A549 (cell line): ENCODE measurements at regions of chr9 and their contacts with region 1.

Region 1: DNA sequence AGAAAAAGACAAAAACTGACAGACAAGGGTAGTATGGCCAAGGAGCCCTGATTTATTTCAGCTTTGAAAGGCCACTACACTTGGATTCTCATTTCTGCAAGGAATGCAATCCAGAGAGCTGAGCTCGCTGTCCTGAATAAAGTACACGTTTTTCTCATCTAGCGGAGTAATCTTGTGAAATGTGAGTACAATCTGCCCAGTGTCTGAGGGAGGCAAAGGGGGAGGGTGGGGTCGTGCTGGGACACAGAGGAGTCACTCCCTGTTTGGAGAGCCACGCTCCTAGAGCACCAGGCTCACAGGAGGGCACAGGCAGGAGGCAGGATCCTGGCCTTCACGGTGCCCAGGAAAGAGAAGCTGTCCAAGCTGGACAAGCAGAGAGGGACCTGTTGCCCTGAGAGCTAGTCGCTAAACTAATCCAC is 51.0 kb upstream of the IFNK start:
- DNase-seq: no peak
- ATAC-seq: no peak
- H3K4me3 ChIP-seq: no peak overlapping the region
- H3K27ac ChIP-seq: no peak overlapping the region
- H3K4me1 ChIP-seq: no peaks in the 10 kb centered on the region
- CTCF ChIP-seq: no peak
- EP300 ChIP-seq: no peak
- POLR2A ChIP-seq: no peak
- RAD21 ChIP-seq: no peak

Region 2: GRCh38 chr9:27447031-27447683 is 26.0 kb before region 1 on chr9:
- CTCF ChIA-PET with region 1: no interaction called
- POLR2A ChIA-PET with region 1: no interaction called
- DNase-seq: no peak
- ATAC-seq: peak; percentile 56 to 68; a peak in 3 of 6 replicates
- H3K4me3 ChIP-seq: no peak overlapping the region
- H3K27ac ChIP-seq: no peak overlapping the region
- H3K4me1 ChIP-seq: no peaks in the 10 kb centered on the region
- CTCF ChIP-seq: no peak
- EP300 ChIP-seq: no peak
- POLR2A ChIP-seq: no peak
- RAD21 ChIP-seq: no peak

Region 3: GRCh38 chr9:27460226-27461023 is 12.7 kb before region 1 on chr9:
- CTCF ChIA-PET with region 1: interaction called, 15 read pairs
- POLR2A ChIA-PET with region 1: no interaction called
- DNase-seq: peak; percentile 36 to 63
- ATAC-seq: peak; percentile 80 to 88
- H3K4me3 ChIP-seq: no peak overlapping the region; the same call in 2 of the 3 replicates
- H3K27ac ChIP-seq: peak overlapping the region; percentile 60 to 79
- H3K4me1 ChIP-seq: peaks cover 43% of the 10 kb centered on the region
- CTCF ChIP-seq: no peak
- EP300 ChIP-seq: peak; percentile 21 to 71; a peak in 3 of 5 replicates
- POLR2A ChIP-seq: no peak
- RAD21 ChIP-seq: no peak

Region 4: GRCh38 chr9:27487927-27488326 is 14.8 kb after region 1 on chr9:
- CTCF ChIA-PET with region 1: interaction called, 10 read pairs
- POLR2A ChIA-PET with region 1: no interaction called
- DNase-seq: no peak
- ATAC-seq: no peak
- H3K4me3 ChIP-seq: no peak overlapping the region
- H3K27ac ChIP-seq: no peak overlapping the region
- H3K4me1 ChIP-seq: no peaks in the 10 kb centered on the region
- CTCF ChIP-seq: no peak
- EP300 ChIP-seq: no peak
- POLR2A ChIP-seq: no peak
- RAD21 ChIP-seq: no peak